ENCODE measurements at regions of chr7 and their contacts with region 1.

Region 1: GRCh38 chr7:41705109-41705901 is 2.4 kb upstream of the INHBA start:
- DNase-seq: peak; percentile 93 to 96 (median 93)
- ATAC-seq: peak; percentile 78 to 93 (median 87)
- H3K4me3 ChIP-seq: peak overlapping the region; percentile 42 to 65 (median 51)
- H3K27ac ChIP-seq: peak overlapping the region; percentile 76 to 94 (median 89)
- H3K4me1 ChIP-seq: peaks cover 0 to 47% (median 4%) of the 10 kb centered on the region in 4 donors
- H3K27me3 ChIP-seq: no peaks in the 10 kb centered on the region
- CTCF ChIP-seq: peak; percentile 56 to 79 (median 62)
- POLR2A ChIP-seq: no peak

Region 2: GRCh38 chr7:41051535-41051934 is 653.8 kb before region 1 on chr7:
- intact Hi-C with region 1: loop called in 1 of 2 experiments (anchors 5 kb)
- DNase-seq: no peak
- ATAC-seq: no peak
- H3K4me3 ChIP-seq: no peak overlapping the region
- H3K27ac ChIP-seq: no peak overlapping the region
- H3K4me1 ChIP-seq: peaks cover 0 to 10% (median 2%) of the 10 kb centered on the region in 4 donors
- H3K27me3 ChIP-seq: no peaks in the 10 kb centered on the region
- CTCF ChIP-seq: no peak
- POLR2A ChIP-seq: no peak

Region 3: DNA sequence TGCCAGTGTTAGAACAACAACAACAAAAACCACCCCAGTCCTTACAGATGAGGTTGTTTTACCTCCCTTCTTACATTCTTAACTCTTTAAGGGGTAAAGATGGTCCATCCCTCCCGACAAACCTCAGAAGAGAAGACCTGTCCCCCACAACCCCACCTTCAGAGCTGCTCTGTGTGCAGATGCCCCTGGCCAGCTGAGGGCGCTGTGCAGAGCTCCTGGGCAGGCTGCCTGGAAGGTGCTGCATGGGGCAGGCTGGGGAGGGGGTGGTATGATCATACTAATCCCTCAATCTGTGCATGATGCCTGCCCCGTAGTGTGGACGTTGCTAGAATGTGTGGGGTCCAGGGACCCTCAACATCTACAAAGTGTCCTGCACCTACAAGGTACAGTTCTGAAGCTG is 389.5 kb before region 1 on chr7:
- intact Hi-C with region 1: loop called in 1 of 2 experiments (anchors 10 kb)
- DNase-seq: peak; percentile 35 to 62 (median 59)
- ATAC-seq: peak; percentile 65 to 74 (median 72)
- H3K4me3 ChIP-seq: no peak overlapping the region
- H3K27ac ChIP-seq: peak overlapping the region in 1 of 3 donors; percentile 43
- H3K4me1 ChIP-seq: peaks cover 0 to 15% (median 3%) of the 10 kb centered on the region in 4 donors
- H3K27me3 ChIP-seq: no peaks in the 10 kb centered on the region
- CTCF ChIP-seq: peak; percentile 28 to 58 (median 46)
- POLR2A ChIP-seq: no peak

Region 4: GRCh38 chr7:41459623-41460261 is 245.6 kb before region 1 on chr7:
- intact Hi-C with region 1: loop called in 1 of 2 experiments (anchors 10 kb)
- DNase-seq: peak; percentile 29 to 69 (median 59)
- ATAC-seq: peak; percentile 64 to 78 (median 72)
- H3K4me3 ChIP-seq: peak overlapping the region in 1 of 3 donors; percentile 16
- H3K27ac ChIP-seq: peak overlapping the region in 2 of 3 donors; percentile 29 to 68
- H3K4me1 ChIP-seq: peaks cover 0 to 19% (median 4%) of the 10 kb centered on the region in 4 donors
- H3K27me3 ChIP-seq: no peaks in the 10 kb centered on the region
- CTCF ChIP-seq: no peak
- POLR2A ChIP-seq: peak; percentile 34

Measured in right lobe of liver (tissue), 6 donors.